Prostate gland (tissue), 2 donors: ENCODE measurements at regions of chr3 and their contacts with region 1.

Region 1: GRCh38 chr3:69306239-69307185 is 79.4 kb downstream of the FRMD4B start:
- DNase-seq: peak; percentile 71
- H3K4me3 ChIP-seq: no peak overlapping the region
- H3K27ac ChIP-seq: peak overlapping the region; percentile 36 to 43
- H3K4me1 ChIP-seq: no peaks in the 10 kb centered on the region
- H3K27me3 ChIP-seq: no peaks in the 10 kb centered on the region
- CTCF ChIP-seq: peak; percentile 73 to 91 (median 88)
- POLR2A ChIP-seq: no peak

Region 2: DNA sequence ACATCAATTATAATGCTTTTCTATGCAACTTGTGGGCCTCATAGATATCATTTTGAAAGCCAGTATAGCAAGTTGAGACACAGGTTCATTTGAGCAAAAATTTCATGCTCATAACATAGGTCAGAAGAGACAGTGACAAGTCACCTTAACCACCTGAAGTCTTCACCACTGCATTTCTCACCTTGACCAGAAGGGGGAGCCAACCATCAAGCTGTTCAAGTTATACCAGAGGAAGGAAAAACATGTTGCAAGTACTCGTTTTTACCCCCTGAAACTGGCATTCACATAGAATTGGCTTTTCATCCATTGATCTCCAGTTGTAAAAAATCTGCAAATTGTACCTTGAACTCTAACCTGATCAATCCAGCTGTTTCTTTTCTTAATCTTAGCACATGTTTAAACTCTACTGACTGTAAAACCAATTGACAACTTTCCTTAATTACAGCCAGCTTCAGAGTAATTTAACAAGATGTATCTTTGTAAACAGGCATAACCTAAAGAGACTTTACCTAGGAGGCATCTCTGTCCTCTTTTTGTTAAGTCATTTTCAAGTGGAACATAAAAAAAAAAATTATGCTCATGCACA is 185.5 kb before region 1 on chr3:
- intact Hi-C with region 1: loop called (anchors 5 kb)
- DNase-seq: peak; percentile 82
- H3K4me3 ChIP-seq: no peak overlapping the region
- H3K27ac ChIP-seq: no peak overlapping the region
- H3K4me1 ChIP-seq: no peaks in the 10 kb centered on the region
- H3K27me3 ChIP-seq: no peaks in the 10 kb centered on the region
- CTCF ChIP-seq: peak; percentile 62 to 84 (median 81)
- POLR2A ChIP-seq: no peak

Region 3: DNA sequence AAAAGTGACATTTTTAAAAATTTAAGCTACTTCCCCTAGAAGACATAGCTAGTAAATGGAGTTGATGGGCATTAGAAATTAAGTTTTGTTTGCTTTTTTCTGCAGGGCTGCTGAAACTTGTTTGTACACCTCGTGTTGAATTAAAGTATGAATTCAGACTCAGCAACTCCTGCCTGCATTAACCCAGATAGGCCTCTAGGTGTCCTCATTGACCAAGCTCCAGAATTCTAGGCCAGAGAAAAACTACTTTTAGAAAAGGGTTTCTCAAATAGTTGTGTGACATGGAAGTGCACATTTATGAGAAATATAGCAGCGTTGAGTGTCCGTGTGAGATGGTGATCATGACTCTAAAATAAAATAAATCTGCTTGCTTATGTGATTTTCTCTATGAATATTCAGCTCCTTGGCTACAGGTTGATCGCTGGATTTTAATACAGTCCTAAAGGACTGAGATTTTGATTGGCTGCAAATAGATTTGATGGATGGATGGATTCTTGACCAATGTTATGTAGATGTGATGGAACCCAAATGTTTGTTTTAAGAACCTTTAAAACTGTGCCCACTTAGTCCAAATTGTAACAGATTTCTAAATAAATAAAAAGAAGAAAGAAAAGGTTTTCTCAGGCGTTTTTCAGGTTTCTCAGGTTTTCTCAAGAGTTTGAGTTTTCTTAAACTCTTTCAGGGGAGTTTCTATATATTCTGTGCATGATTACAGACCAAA is 144.8 kb before region 1 on chr3:
- intact Hi-C with region 1: loop called (anchors 5 kb)
- DNase-seq: peak; percentile 22
- H3K4me3 ChIP-seq: no peak overlapping the region
- H3K27ac ChIP-seq: no peak overlapping the region
- H3K4me1 ChIP-seq: no peaks in the 10 kb centered on the region
- H3K27me3 ChIP-seq: no peaks in the 10 kb centered on the region
- CTCF ChIP-seq: peak; percentile 84 to 94 (median 89)
- POLR2A ChIP-seq: no peak

Region 4: DNA sequence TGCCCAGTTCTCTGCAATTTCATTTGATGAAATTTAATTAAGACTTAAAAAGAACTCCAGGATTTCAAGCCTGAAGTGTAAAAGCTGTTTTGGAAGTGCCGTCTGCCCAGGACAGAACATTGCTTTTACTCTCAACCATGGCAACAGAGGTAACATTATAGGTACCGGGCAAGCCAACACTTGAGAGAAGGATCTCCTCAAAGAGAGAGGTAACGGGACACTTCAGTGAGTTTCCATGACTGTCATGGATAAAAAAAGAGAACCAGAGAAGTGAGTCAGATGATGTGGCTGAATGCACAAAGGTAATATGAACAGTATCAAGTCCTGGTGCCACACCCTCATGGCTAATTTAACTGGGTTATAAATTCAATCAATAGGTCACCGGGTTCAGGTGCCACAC is 53.9 kb before region 1 on chr3:
- intact Hi-C with region 1: no loop called
- DNase-seq: no peak
- H3K4me3 ChIP-seq: no peak overlapping the region
- H3K27ac ChIP-seq: no peak overlapping the region
- H3K4me1 ChIP-seq: no peaks in the 10 kb centered on the region
- H3K27me3 ChIP-seq: no peaks in the 10 kb centered on the region
- CTCF ChIP-seq: no peak
- POLR2A ChIP-seq: no peak

Region 5: GRCh38 chr3:69410250-69410649 is 103.7 kb after region 1 on chr3:
- intact Hi-C with region 1: loop called (anchors 5 kb)
- DNase-seq: peak; percentile 56
- H3K4me3 ChIP-seq: no peak overlapping the region
- H3K27ac ChIP-seq: no peak overlapping the region
- H3K4me1 ChIP-seq: no peaks in the 10 kb centered on the region
- H3K27me3 ChIP-seq: no peaks in the 10 kb centered on the region
- CTCF ChIP-seq: peak in 3 of 4 experiments; percentile 58 to 75 (median 67)
- POLR2A ChIP-seq: no peak

Region 6: GRCh38 chr3:69671082-69671952 is 364.8 kb after region 1 on chr3:
- intact Hi-C with region 1: loop called (anchors 5 kb)
- DNase-seq: peak; percentile 29
- H3K4me3 ChIP-seq: no peak overlapping the region
- H3K27ac ChIP-seq: no peak overlapping the region
- H3K4me1 ChIP-seq: no peaks in the 10 kb centered on the region
- H3K27me3 ChIP-seq: no peaks in the 10 kb centered on the region
- CTCF ChIP-seq: peak; percentile 27 to 78 (median 68)
- POLR2A ChIP-seq: no peak